ENCODE measurements at regions of chr1 and their contacts with region 1.

Region 1: DNA sequence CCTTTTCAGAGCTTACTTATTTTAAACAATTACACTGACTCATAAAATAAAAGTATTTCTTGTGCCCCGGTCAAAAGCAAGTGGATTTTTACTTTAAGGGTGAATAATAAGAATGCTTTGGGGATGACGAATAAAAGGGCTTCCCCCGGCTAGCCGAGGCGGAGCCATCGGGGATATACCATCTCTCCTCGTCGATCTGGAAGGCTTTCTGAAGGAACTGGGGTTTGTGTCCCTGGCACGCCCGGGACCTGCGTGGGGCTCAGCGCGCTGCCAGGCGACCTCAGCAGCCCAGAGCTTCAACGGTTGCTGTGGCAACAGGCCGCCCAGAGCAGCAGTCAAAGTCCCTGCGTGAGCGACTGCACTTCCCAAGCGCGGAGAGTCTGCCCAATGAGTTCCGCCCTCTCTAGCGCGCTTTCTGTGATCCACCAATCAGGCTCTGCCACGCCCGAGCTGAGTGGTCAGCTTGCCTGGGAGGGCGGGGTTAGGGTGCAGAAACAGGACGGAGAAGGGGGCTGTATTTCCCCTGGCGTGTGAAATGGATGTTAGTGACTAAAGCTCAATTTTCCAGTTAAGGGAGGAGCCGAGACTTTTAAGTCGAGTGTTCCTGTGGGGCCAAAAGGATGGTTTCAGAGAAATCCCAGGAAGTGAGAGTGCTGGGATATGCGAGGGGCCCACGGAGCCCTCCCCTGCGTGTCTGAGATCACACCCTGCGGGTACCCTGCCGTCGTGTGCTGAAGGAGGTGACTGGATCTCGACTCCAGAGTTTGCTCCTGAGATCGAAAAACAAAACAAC is 33.0 kb upstream of the MGST3 start:
- DNase-seq: peak; percentile 98
- H3K4me3 Mint-ChIP-seq: peak overlapping the region; percentile 89
- H3K27ac Mint-ChIP-seq: peak overlapping the region; percentile 89
- H3K4me1 Mint-ChIP-seq: peaks cover 21% of the 10 kb centered on the region
- H3K27me3 Mint-ChIP-seq: peaks cover 19% of the 10 kb centered on the region

Region 2: GRCh38 chr1:165367375-165367993 is 230.6 kb before region 1 on chr1:
- CTCF ChIA-PET with region 1: interaction called, 26 read pairs
- intact Hi-C with region 1: loop called (anchors 1 kb)
- DNase-seq: peak; percentile 88
- H3K4me3 Mint-ChIP-seq: no peak overlapping the region
- H3K27ac Mint-ChIP-seq: no peak overlapping the region
- H3K4me1 Mint-ChIP-seq: no peaks in the 10 kb centered on the region
- H3K27me3 Mint-ChIP-seq: peaks cover 59% of the 10 kb centered on the region

Region 3: GRCh38 chr1:165630629-165631341 is 32.7 kb after region 1 on chr1 and contains the start of gene MGST3:
- CTCF ChIA-PET with region 1: interaction called, 11 read pairs
- intact Hi-C with region 1: loop called (anchors 1 kb)
- DNase-seq: peak; percentile 97
- H3K4me3 Mint-ChIP-seq: no peak within 1 kb of the TSS
- H3K27ac Mint-ChIP-seq: no peak within 1 kb of the TSS
- H3K4me1 Mint-ChIP-seq: peaks cover 19% of the 10 kb centered on the region
- H3K27me3 Mint-ChIP-seq: no peaks in the 10 kb centered on the region
- total RNA-seq, gene MGST3: 26.6 to 29.2 TPM

Region 4: DNA sequence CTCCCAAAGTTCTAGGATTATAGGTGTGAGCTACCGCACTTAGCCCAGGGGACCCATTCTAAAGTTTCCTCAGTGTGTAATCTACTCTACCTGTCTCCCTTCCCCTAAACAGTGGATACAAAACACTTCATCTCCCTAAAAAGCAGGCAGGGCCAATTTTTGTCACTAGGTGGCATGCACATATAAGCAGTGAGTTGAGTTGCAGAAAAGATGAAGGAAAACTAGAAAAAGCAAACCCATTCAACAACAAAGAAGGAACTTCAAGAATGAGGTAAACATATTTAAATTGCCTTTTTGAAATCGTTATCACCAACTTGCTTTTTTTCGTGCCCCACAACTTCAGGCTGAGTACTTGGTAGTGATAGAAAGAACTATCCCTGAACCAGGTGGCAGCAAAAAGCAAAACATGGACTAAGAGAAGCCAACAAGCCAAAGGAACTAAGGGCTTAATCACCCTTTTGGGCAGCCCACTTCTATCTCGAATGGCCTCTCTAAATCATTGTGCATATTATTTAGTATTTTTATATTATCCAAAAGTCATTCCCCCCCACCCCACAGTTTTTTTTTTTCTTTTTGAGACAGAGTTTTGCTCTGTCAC is 119.9 kb after region 1 on chr1:
- CTCF ChIA-PET with region 1: interaction called, 7 read pairs
- intact Hi-C with region 1: loop called (anchors 1 kb)
- DNase-seq: peak; percentile 67
- H3K4me3 Mint-ChIP-seq: no peak overlapping the region
- H3K27ac Mint-ChIP-seq: no peak overlapping the region
- H3K4me1 Mint-ChIP-seq: no peaks in the 10 kb centered on the region
- H3K27me3 Mint-ChIP-seq: no peaks in the 10 kb centered on the region

Region 5: GRCh38 chr1:165871311-165872067 is 273.4 kb after region 1 on chr1:
- CTCF ChIA-PET with region 1: interaction called, 5 read pairs
- intact Hi-C with region 1: loop called (anchors 1 kb)
- DNase-seq: peak; percentile 83
- H3K4me3 Mint-ChIP-seq: no peak overlapping the region
- H3K27ac Mint-ChIP-seq: no peak overlapping the region
- H3K4me1 Mint-ChIP-seq: peaks cover 47% of the 10 kb centered on the region
- H3K27me3 Mint-ChIP-seq: peaks cover 1% of the 10 kb centered on the region

Region 6: GRCh38 chr1:166166695-166167571 is 568.9 kb after region 1 on chr1 and contains the start of gene FAM78B:
- CTCF ChIA-PET with region 1: no interaction called
- intact Hi-C with region 1: loop called (anchors 5 kb)
- DNase-seq: peak; percentile 65
- H3K4me3 Mint-ChIP-seq: peak within 1 kb of the TSS; percentile 71
- H3K27ac Mint-ChIP-seq: no peak within 1 kb of the TSS
- H3K4me1 Mint-ChIP-seq: peaks cover 30% of the 10 kb centered on the region
- H3K27me3 Mint-ChIP-seq: peaks cover 55% of the 10 kb centered on the region
- total RNA-seq, gene FAM78B: 0.24 TPM in 1 of 2 experiments, not detected in the other